ENCODE measurements at regions of chr12 and their contacts with region 1.

Region 1: GRCh38 chr12:48851883-48852733 is at the start of gene DDX23:
- DNase-seq: peak; percentile 94 to 97 (median 95)
- ATAC-seq: peak; percentile 98
- H3K4me3 ChIP-seq: peak within 1 kb of the TSS; percentile 17 to 55
- H3K27ac ChIP-seq: peak within 1 kb of the TSS; percentile 12 to 81 (median 50)
- H3K4me1 ChIP-seq: peaks cover 25% of the 10 kb centered on the region
- H3K27me3 ChIP-seq: no peaks in the 10 kb centered on the region
- CTCF ChIP-seq: peak in 1 of 7 experiments; percentile 9
- POLR2A ChIP-seq: peak; percentile 40 to 85 (median 70)
- total RNA-seq, gene DDX23: 37.4 to 50.8 TPM

Region 2: DNA sequence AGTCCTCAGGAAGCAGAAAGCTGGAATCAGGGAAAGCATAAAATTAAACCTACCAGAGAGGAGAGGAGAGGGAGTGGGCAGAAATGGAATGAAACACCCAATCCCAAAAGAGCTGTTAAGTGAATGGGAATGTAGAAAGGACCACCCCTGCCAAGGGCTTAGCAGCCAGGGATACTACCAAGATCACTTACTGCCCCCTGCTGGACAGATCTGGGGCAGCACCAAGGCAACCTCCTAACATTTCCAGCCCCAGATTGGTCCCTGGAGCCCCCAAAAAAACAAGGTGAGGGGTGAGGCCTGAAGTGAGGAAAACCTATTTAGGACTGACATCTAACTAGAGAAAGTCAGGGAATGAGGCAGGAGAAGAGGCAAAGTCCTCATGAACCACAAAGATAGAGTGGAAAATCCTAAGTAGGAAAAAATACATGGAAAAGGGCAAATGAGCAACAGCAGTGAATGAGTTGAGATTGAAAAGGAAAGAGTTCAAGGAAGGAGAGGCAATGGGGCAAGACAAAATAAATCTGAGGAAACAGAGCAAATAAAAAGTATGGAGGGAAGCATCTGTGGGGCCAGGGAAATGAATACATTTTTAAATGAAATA is 84.4 kb after region 1 on chr12:
- intact Hi-C with region 1: loop called (anchors 10 kb)
- DNase-seq: peak; percentile 74 to 85 (median 78)
- ATAC-seq: peak; percentile 79
- H3K4me3 ChIP-seq: no peak overlapping the region
- H3K27ac ChIP-seq: no peak overlapping the region
- H3K4me1 ChIP-seq: no peaks in the 10 kb centered on the region
- H3K27me3 ChIP-seq: no peaks in the 10 kb centered on the region
- CTCF ChIP-seq: peak; percentile 64 to 95 (median 82)
- POLR2A ChIP-seq: no peak

Region 3: GRCh38 chr12:49069507-49070346 is 217.6 kb after region 1 on chr12 and contains the start of gene RHEBL1:
- intact Hi-C with region 1: no loop called
- DNase-seq: peak; percentile 98 to 99 (median 99)
- ATAC-seq: peak; percentile 100
- H3K4me3 ChIP-seq: peak within 1 kb of the TSS; percentile 57 to 63
- H3K27ac ChIP-seq: peak within 1 kb of the TSS in 3 of 4 donors; percentile 32 to 83 (median 78)
- H3K4me1 ChIP-seq: peaks cover 14% of the 10 kb centered on the region
- H3K27me3 ChIP-seq: no peaks in the 10 kb centered on the region
- CTCF ChIP-seq: no peak
- POLR2A ChIP-seq: peak in 2 of 3 donors; percentile 40 to 61
- total RNA-seq, gene RHEBL1: not detected

Measured in body of pancreas (tissue), 4 donors.